Naive thymus-derived CD8-positive, alpha-beta T cell (primary cell): ENCODE measurements at regions of chr19 and their contacts with region 1.

Region 1: GRCh38 chr19:2061495-2062381 is 10.7 kb upstream of the MKNK2 start:
- DNase-seq: peak; percentile 99 to 100 (median 100)
- ATAC-seq: peak; percentile 89 to 93
- H3K4me3 Mint-ChIP-seq: peak overlapping the region; percentile 86 to 96 (median 92)
- H3K27ac Mint-ChIP-seq: peak overlapping the region; percentile 87 to 98 (median 98)
- H3K4me1 Mint-ChIP-seq: peaks cover 8 to 56% (median 38%) of the 10 kb centered on the region in 4 donors
- H3K27me3 Mint-ChIP-seq: no peaks in the 10 kb centered on the region

Region 2: DNA sequence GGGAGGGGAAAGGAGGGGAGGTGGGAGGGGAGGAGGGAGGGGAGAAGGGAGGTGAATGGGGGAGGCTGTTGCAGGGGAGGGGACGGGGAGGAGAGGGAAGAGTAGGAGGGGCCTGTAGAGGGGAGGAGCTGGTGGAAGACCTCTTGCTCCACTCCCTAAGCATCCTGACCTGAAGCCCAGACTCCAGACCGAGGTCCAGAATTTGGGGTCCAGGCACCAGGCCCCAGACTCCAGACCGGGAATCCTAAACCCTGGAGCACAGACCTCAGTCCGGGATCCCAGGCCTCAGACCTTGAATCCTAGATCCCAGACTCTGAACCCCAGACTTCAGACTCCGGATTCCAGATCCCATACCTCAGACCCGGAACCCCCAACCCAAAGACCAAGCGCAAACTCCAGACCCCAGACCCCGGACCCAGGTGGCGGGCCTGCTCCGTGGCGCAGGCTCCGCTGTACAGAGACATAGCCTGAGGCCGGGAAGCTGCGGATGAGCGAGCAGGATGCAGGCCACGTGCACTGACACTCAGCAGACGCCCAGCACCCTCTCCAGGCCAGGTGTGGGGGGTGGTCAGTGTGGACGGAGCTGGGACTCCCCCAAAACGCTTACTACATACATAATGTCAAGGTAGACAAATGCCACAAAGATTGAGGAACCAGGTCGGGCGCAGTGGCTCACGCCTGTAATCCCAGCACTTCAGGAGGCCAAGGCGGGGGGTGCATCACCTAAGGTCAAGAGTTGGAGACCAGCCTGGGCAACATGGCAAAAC is 45.5 kb before region 1 on chr19:
- POLR2A ChIA-PET with region 1: interaction called, 13 read pairs
- DNase-seq: peak in 7 of 10 donors; percentile 37 to 85 (median 51)
- ATAC-seq: peak; percentile 33 to 50
- H3K4me3 Mint-ChIP-seq: peak overlapping the region; percentile 47 to 75 (median 56)
- H3K27ac Mint-ChIP-seq: peak overlapping the region in 9 of 10 donors; percentile 9 to 85 (median 68)
- H3K4me1 Mint-ChIP-seq: peaks cover 8 to 35% (median 26%) of the 10 kb centered on the region in 4 donors
- H3K27me3 Mint-ChIP-seq: no peaks in the 10 kb centered on the region

Region 3: DNA sequence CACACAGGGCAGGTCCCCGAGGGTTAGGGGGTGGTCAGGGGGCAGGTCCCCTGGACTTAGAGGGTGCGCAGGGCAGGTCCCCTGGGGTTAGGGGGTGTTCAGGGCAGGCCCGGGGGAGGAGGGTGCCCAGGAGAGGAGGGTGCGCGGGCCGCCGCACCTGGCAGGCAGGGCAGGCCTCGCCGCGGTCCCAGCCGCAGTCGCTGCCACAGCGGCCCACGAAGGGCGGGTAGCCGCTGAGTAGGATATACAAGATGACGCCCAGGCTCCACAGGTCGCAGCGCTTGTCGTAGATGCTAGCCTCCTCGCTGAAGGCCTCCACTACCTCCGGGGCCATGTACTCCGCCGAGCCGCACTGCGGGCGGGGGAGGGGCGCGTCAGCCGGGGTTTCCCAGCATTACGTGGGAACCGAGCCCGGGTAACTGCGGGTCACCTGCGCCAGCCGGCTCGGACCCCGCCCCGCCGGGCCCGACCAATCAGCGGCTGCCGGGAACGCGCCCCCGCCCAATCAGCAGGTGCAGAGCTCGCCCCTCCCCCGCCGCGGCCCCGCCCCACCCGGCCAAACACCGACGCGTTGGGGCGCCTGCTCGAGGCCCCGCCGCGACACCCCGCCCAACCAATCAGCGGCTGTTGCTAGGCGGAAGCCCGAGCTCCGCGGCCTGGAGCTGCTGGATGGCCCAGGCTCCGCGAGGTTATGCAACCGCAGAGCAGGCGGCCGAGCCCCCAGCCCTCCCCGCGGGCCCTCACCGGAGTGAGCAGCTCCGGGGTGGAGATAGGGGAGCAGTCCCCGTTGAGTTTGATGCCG is 19.9 kb before region 1 on chr19:
- POLR2A ChIA-PET with region 1: interaction called, 255 read pairs
- DNase-seq: peak; percentile 97 to 100 (median 99)
- ATAC-seq: peak; percentile 83 to 85
- H3K4me3 Mint-ChIP-seq: peak overlapping the region in 9 of 10 donors; percentile 56 to 80 (median 63)
- H3K27ac Mint-ChIP-seq: peak overlapping the region in 9 of 10 donors; percentile 48 to 98 (median 95)
- H3K4me1 Mint-ChIP-seq: peaks cover 9 to 44% (median 42%) of the 10 kb centered on the region in 4 donors
- H3K27me3 Mint-ChIP-seq: no peaks in the 10 kb centered on the region

Region 4: GRCh38 chr19:2050991-2051772 is 10.6 kb before region 1 on chr19 and contains the start of gene MKNK2:
- POLR2A ChIA-PET with region 1: interaction called, 112 read pairs
- DNase-seq: peak; percentile 85 to 99 (median 96)
- ATAC-seq: peak; percentile 76
- H3K4me3 Mint-ChIP-seq: peak within 1 kb of the TSS; percentile 80 to 92 (median 88)
- H3K27ac Mint-ChIP-seq: peak within 1 kb of the TSS; percentile 83 to 97 (median 96)
- H3K4me1 Mint-ChIP-seq: peaks cover 19 to 63% (median 56%) of the 10 kb centered on the region in 4 donors
- H3K27me3 Mint-ChIP-seq: no peaks in the 10 kb centered on the region
- polyA plus RNA-seq, gene MKNK2: 26.1 to 47.1 (median 30.2) TPM